Caco-2 (cell line): ENCODE measurements at regions of chr15 and their contacts with region 1.

Region 1: DNA sequence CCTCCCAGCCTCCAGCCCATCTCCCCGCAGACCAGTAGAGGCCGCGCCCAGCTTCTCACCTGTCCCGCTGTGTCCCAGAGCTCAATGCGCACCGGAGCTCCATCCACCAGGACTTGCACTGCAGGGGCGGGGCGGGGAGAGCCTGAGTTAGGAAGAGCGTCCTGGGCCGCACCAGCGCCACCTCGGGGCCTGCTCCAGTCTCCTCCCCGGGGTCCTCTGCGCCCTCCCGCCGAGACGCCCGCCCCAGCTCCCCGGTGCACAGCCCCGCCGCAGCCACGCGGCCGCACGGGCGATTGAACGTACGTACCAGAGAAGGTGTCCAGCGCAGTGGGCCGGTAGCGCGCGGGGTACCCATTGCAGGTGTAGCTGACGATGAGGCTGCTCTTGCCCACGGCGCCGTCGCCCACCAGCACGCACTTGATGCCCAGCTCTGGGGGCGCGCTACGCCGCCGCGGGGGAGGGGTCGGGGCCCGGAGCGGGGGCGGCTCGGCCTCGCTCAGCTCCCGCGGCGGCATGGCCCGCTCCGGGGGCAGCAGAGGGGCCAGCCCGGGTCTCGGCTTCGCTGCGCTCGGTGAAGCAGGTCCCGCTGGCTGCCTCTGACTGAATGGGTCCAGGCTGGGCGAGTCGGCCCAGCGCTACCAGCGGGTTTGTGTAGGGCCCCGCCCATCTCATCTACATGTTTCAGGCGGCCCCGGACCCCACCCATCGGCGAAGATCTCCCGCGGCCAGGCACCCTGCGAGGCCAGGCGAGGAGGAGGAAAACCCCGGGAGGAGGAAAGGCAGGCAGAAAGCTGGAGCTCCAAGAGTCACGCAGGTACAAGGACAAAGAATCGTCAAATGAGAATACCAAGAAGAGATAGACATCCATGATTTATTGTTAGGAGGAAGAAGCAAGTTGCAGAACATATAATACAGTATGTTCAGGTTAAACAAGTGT is at the start of gene RHOV:
- DNase-seq: peak; percentile 90 to 92
- H3K4me3 ChIP-seq: peak within 1 kb of the TSS; percentile 88
- H3K4me3 Mint-ChIP-seq: peak within 1 kb of the TSS; percentile 68
- H3K27ac Mint-ChIP-seq: peak within 1 kb of the TSS; percentile 64
- H3K4me1 ChIP-seq: peaks cover 15% of the 10 kb centered on the region
- H3K4me1 Mint-ChIP-seq: peaks cover 8% of the 10 kb centered on the region
- H3K27me3 ChIP-seq: no peaks in the 10 kb centered on the region
- H3K27me3 Mint-ChIP-seq: no peaks in the 10 kb centered on the region
- CTCF ChIP-seq: peak in 1 of 2 experiments; percentile 59
- total RNA-seq, gene RHOV: 3.2 and 4.4 TPM in 2 replicates

Region 2: GRCh38 chr15:40595773-40596172 is 278.1 kb before region 1 on chr15:
- CTCF ChIA-PET with region 1: no interaction called
- POLR2A ChIA-PET with region 1: no interaction called
- intact Hi-C with region 1: no loop called
- DNase-seq: no peak
- H3K4me3 ChIP-seq: peak overlapping the region; percentile 93
- H3K4me3 Mint-ChIP-seq: no peak overlapping the region
- H3K27ac Mint-ChIP-seq: no peak overlapping the region
- H3K4me1 ChIP-seq: peaks cover 4% of the 10 kb centered on the region; the same call in 1 of the 2 replicates
- H3K4me1 Mint-ChIP-seq: peaks cover 14% of the 10 kb centered on the region
- H3K27me3 ChIP-seq: no peaks in the 10 kb centered on the region
- H3K27me3 Mint-ChIP-seq: no peaks in the 10 kb centered on the region
- CTCF ChIP-seq: no peak

Region 3: GRCh38 chr15:40807028-40807887 is 66.6 kb before region 1 on chr15 and contains the starts of genes DNAJC17 and ZFYVE19:
- CTCF ChIA-PET with region 1: interaction called, 11 read pairs
- POLR2A ChIA-PET with region 1: no interaction called
- intact Hi-C with region 1: no loop called
- DNase-seq: peak; percentile 96 to 97
- H3K4me3 ChIP-seq: peak within 1 kb of the TSS; percentile 88
- H3K4me3 Mint-ChIP-seq: peak within 1 kb of the TSS; percentile 95
- H3K27ac Mint-ChIP-seq: peak within 1 kb of the TSS; percentile 94
- H3K4me1 ChIP-seq: 0 out of 2 replicates have a peak, but pooled peaks cover 4% of the 10 kb centered on the region
- H3K4me1 Mint-ChIP-seq: no peaks in the 10 kb centered on the region
- H3K27me3 ChIP-seq: no peaks in the 10 kb centered on the region
- H3K27me3 Mint-ChIP-seq: no peaks in the 10 kb centered on the region
- CTCF ChIP-seq: no peak
- total RNA-seq, gene DNAJC17: 26.3 and 30.1 TPM in 2 replicates
- total RNA-seq, gene ZFYVE19: 26.7 and 26.9 TPM in 2 replicates

Region 4: DNA sequence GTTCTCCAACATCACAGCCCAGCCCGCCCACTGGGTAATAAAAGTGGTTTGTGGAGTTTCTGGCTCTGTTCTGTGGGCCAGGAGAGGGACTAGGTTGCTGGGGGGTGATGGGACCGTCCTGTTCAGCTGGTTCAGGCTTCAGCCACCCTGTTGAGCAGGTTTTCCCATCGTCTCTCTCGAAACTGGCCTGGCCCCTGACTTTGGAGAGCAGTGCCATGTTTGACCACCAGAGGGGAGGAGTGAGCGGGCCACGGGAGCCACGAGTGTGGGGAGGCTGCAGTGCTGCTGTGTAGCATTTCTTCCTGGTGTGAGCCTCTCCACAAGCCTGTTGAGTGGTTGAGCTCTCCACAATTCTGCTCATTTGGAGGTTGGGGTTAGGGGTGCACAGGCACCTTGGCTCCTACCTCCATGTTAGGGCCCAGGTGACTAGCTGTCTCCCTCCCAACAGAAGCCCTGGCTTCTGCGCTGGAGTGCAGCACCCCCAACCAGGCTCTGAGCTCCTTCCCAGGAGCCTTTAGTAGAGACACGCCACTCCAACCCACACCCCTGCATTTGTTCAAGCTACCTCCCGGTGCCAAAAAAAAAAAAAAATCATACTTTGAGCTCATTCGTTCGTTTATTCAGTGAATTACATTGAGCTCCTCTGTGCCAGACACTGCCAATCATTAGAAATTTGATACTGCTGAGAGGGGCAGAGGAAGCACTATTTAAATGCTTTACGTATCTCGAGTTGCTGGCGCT is 16.1 kb before region 1 on chr15:
- CTCF ChIA-PET with region 1: interaction called, 133 read pairs
- POLR2A ChIA-PET with region 1: interaction called, 13 read pairs
- intact Hi-C with region 1: no loop called
- DNase-seq: peak; percentile 92 to 96
- H3K4me3 ChIP-seq: no peak overlapping the region
- H3K4me3 Mint-ChIP-seq: peak overlapping the region; percentile 56
- H3K27ac Mint-ChIP-seq: peak overlapping the region; percentile 86
- H3K4me1 ChIP-seq: peaks cover 24% of the 10 kb centered on the region
- H3K4me1 Mint-ChIP-seq: peaks cover 39% of the 10 kb centered on the region
- H3K27me3 ChIP-seq: no peaks in the 10 kb centered on the region
- H3K27me3 Mint-ChIP-seq: no peaks in the 10 kb centered on the region
- CTCF ChIP-seq: peak; percentile 89 to 94